ENCODE measurements at regions of chr3 and their contacts with region 1.

Region 1: DNA sequence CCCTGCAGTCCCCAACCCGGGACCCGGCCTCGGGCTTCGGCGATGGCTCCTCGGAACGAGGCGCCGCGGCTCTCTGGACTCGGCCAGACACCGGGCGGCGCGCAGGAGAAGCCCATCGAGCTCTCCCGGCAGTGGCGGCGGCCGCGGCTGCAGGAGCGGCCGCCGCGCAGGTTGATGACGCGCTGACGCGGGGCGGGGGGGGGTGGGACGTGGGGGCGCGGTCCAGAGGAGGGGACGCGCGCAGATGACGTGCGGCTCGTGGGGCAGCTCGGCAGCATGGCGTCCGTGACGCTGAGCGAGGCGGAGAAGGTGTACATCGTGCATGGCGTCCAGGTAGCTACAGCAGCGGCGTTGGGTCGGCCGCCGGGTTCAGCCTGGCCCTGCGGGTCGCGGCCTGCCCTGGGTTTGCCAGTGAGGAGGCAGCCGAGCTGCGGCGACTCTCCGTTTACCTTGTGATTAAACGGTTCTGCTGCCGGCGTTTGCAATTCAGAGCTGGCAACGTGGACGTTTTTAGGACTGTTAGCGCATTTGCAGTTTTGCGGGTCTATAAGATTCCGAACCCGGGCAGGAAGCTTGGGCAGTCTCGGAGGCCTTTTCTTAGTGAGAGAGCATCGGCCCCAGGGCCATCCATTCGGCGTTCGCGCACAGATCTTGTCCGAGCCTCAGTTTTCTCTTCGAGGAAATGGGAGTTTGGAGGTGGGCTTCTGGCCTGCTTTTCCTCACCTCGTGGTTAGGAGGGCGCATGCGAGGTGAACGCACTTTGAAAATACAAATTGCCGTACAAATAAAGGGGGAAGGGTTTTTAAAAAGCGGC is at the starts of genes EXOSC7 and ZDHHC3:
- DNase-seq: peak; percentile 90
- ATAC-seq: peak; percentile 92
- H3K4me3 Mint-ChIP-seq: peak within 1 kb of the TSS; percentile 92
- H3K27ac Mint-ChIP-seq: peak within 1 kb of the TSS; percentile 92
- H3K4me1 Mint-ChIP-seq: peaks cover 52% of the 10 kb centered on the region
- H3K27me3 Mint-ChIP-seq: no peaks in the 10 kb centered on the region
- total RNA-seq, gene EXOSC7: 51.3 to 66.1 TPM
- total RNA-seq, gene ZDHHC3: 54.0 to 54.9 TPM

Region 2: DNA sequence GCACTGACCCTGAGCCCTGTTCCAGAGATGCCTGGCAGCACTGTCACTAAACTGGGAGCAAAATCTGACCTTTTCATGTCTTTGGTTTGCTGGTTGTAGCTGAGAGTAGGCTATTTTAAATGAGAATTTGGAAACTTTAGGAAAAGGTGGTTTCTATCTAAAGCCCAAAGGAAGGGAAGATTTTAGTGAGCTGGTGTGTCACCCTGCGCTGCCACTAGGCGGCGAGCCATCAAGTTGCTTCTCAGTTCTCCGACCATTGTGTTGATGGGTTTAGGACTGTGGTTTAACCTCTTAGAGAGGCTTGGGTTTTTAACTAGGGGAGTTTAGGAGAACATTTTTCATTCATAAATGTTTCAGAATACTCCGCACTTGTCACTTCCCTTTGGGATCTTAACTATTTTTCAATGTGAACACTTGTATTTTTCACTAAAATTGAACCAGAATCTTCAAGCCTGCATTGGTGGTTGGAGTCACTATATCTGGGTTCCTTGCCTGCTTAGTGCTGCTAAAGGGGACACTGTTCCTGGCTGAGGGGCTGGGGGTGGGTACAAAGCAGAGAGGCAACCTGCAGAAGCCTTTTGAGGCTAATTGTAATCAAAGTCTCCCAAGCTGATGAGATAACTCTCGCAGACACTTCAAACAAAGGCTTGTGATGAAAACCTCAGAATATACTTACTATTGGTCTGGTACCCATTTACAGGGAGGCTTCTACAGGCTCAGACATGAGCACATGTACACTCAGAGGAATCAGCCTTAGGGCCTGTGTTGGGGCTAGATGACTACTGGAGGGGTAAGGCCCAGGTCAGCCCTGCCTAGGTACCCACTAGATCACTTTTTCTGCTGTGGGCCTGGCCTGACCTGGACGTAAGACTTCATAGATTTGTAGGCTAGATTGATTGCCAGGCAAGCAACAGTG is 16.6 kb after region 1 on chr3:
- CTCF ChIA-PET with region 1: interaction called, 17 read pairs
- DNase-seq: no peak
- ATAC-seq: no peak
- H3K4me3 Mint-ChIP-seq: no peak overlapping the region
- H3K27ac Mint-ChIP-seq: no peak overlapping the region
- H3K4me1 Mint-ChIP-seq: peaks cover 29% of the 10 kb centered on the region
- H3K27me3 Mint-ChIP-seq: no peaks in the 10 kb centered on the region

Measured in activated CD8-positive, alpha-beta memory T cell treated with anti-CD3 and anti-CD28 coated beads, Interleukin-2, amount 10 ng/mL, durations not matched to agents 7 days and 5 days (primary cell).